Posterior cingulate gyrus (tissue), 11 donors: ENCODE measurements at regions of chr1 and their contacts with region 1.

Region 1: GRCh38 chr1:95957748-95958147 is 723.7 kb downstream of the RWDD3 start:
- DNase-seq: no peak

Region 2: DNA sequence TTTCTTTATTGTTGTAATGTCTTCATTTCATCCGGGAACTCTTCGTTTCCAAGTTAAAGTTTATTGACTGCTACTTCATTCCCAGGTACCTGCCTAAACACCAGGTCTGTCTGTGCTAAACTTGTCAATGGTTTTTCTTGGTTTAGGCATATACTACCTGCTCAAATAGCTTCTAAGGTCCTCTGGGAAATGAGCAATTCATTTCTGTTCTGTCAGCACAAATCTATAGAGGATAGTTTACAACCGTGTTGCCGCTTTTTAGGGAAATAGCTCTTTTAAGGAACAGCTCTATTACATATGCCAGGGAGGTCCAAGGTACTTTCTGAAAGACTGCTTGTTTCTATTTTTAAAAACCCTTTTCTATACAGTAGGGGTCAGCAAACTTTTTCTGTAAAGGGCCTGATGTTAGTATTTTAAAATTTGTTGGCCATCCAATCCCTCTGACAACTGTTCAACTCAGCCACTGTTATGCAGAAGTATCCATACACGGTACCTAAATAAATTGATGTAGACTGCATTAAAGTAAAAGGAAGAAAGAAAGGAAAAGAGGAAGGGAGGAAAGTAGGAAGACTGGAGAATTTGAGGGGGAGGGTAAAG is 541.1 kb after region 1 on chr1:
- intact Hi-C with region 1: loop called (anchors 5 kb)
- DNase-seq: no peak